ENCODE measurements at regions of chr5 and their contacts with region 1.

Region 1: GRCh38 chr5:115309751-115310370 is 13.4 kb upstream of the CCDC112 start:
- DNase-seq: peak; percentile 49
- ATAC-seq: peak; percentile 69
- H3K4me3 ChIP-seq: no peak overlapping the region
- H3K27ac ChIP-seq: no peak overlapping the region
- H3K4me1 ChIP-seq: peaks cover 0 to 3% of the 10 kb centered on the region in 2 experiments; a peak in 1 of 4 replicates
- H3K27me3 ChIP-seq: no peaks in the 10 kb centered on the region
- CTCF ChIP-seq: peak; percentile 48 to 78 (median 70); a peak in 5 of 6 replicates
- POLR2A ChIP-seq: no peak
- RAD21 ChIP-seq: peak; percentile 87

Region 2: DNA sequence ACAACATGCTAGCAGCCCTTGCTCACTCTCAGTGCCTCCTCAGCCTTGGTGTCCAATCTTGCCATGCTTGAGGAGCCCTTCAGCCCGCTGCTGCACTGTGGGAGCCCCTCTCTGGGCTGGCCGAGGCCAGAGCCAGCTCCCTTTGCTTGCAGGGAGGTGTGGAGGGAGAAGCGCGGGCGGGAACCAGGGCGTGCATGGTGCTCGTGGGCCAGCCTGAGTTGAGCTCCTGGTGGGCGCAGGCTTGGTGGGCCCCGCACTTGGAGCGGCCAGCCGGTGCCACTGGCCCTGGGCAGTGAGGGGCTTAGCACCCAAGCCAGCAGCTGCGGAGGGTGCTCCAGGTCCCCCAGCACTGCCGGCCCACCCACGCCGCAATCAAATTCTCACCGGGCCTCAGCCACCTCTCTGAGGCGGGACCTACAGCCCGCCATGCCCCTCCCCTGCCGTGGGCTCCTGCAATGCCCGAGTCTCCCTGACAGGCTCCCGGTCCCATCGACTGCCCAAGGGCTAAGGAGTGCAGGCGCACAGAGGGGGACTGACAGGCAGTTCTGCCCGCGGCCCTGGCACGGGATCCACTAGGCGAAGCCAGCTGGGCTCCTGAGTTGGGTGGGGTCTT is 614.5 kb before region 1 on chr5:
- CTCF ChIA-PET with region 1: no interaction called
- POLR2A ChIA-PET with region 1: no interaction called
- RAD21 ChIA-PET with region 1: no interaction called
- intact Hi-C with region 1: no loop called
- DNase-seq: no peak
- ATAC-seq: no peak
- H3K4me3 ChIP-seq: no peak overlapping the region
- H3K27ac ChIP-seq: no peak overlapping the region
- H3K4me1 ChIP-seq: no peaks in the 10 kb centered on the region
- H3K27me3 ChIP-seq: no peaks in the 10 kb centered on the region
- CTCF ChIP-seq: no peak
- POLR2A ChIP-seq: no peak
- RAD21 ChIP-seq: no peak

Region 3: GRCh38 chr5:115377468-115378217 is 67.8 kb after region 1 on chr5:
- CTCF ChIA-PET with region 1: interaction called, 6 read pairs
- POLR2A ChIA-PET with region 1: no interaction called
- RAD21 ChIA-PET with region 1: no interaction called
- intact Hi-C with region 1: loop called (anchors 5 kb)
- DNase-seq: peak; percentile 35
- ATAC-seq: peak; percentile 61
- H3K4me3 ChIP-seq: peak overlapping the region; percentile 16 to 33
- H3K27ac ChIP-seq: peak overlapping the region; percentile 2; the same call in 1 of the 2 replicates
- H3K4me1 ChIP-seq: peaks cover 18 to 64% of the 10 kb centered on the region in 2 experiments
- H3K27me3 ChIP-seq: no peaks in the 10 kb centered on the region
- CTCF ChIP-seq: peak; percentile 30 to 58 (median 49); a peak in 4 of 6 replicates
- POLR2A ChIP-seq: no peak
- RAD21 ChIP-seq: peak; percentile 77

Region 4: DNA sequence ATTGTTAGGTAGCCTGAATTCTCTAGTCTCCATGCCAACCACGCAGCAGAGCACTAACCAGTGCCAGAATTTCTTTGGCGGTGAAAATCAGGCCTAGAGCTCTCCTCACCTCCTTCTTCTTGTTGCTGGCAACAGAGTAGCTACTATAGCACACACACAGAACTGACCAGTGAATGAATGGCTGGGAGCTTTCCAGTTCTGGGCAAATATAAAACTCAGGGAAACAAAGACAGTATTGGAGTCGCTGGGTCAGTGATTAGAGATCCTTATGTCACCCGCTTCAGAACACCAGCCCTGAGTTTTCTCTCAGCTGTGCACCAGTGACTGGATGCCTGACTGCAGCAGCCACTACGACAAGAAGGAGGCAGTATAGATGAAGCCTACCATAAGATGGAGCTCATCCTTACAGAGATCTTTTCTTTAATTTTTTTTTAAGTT is 261.6 kb after region 1 on chr5:
- CTCF ChIA-PET with region 1: interaction called, 51 read pairs
- POLR2A ChIA-PET with region 1: interaction called, 6 read pairs
- RAD21 ChIA-PET with region 1: interaction called, 7 to 22 read pairs
- intact Hi-C with region 1: loop called (anchors 1 kb)
- DNase-seq: no peak
- ATAC-seq: peak; percentile 39; the same call in 1 of the 2 replicates
- H3K4me3 ChIP-seq: no peak overlapping the region
- H3K27ac ChIP-seq: no peak overlapping the region
- H3K4me1 ChIP-seq: peaks cover 0 to 32% of the 10 kb centered on the region in 2 experiments; a peak in 3 of 4 replicates
- H3K27me3 ChIP-seq: no peaks in the 10 kb centered on the region
- CTCF ChIP-seq: peak in 1 of 3 experiments; percentile 19; a peak in 1 of 6 replicates
- POLR2A ChIP-seq: no peak
- RAD21 ChIP-seq: no peak

Region 5: GRCh38 chr5:115579747-115580173 is 269.9 kb after region 1 on chr5:
- CTCF ChIA-PET with region 1: interaction called, 51 read pairs
- POLR2A ChIA-PET with region 1: interaction called, 6 read pairs
- RAD21 ChIA-PET with region 1: interaction called, 7 to 22 read pairs
- intact Hi-C with region 1: loop called (anchors 1 kb)
- DNase-seq: no peak
- ATAC-seq: no peak
- H3K4me3 ChIP-seq: no peak overlapping the region
- H3K27ac ChIP-seq: no peak overlapping the region
- H3K4me1 ChIP-seq: peaks cover 0 to 22% of the 10 kb centered on the region in 2 experiments; a peak in 3 of 4 replicates
- H3K27me3 ChIP-seq: no peaks in the 10 kb centered on the region
- CTCF ChIP-seq: no peak
- POLR2A ChIP-seq: no peak
- RAD21 ChIP-seq: no peak

Region 6: GRCh38 chr5:115586601-115587048 is 276.8 kb after region 1 on chr5:
- CTCF ChIA-PET with region 1: interaction called, 3 read pairs
- POLR2A ChIA-PET with region 1: no interaction called
- RAD21 ChIA-PET with region 1: no interaction called
- intact Hi-C with region 1: loop called (anchors 2 kb)
- DNase-seq: no peak
- ATAC-seq: peak; percentile 64
- H3K4me3 ChIP-seq: no peak overlapping the region
- H3K27ac ChIP-seq: no peak overlapping the region
- H3K4me1 ChIP-seq: peaks cover 0 to 4% of the 10 kb centered on the region in 2 experiments; a peak in 1 of 4 replicates
- H3K27me3 ChIP-seq: no peaks in the 10 kb centered on the region
- CTCF ChIP-seq: peak in 2 of 3 experiments; percentile 59 to 62; a peak in 3 of 6 replicates
- POLR2A ChIP-seq: no peak
- RAD21 ChIP-seq: peak; percentile 74

Region 7: DNA sequence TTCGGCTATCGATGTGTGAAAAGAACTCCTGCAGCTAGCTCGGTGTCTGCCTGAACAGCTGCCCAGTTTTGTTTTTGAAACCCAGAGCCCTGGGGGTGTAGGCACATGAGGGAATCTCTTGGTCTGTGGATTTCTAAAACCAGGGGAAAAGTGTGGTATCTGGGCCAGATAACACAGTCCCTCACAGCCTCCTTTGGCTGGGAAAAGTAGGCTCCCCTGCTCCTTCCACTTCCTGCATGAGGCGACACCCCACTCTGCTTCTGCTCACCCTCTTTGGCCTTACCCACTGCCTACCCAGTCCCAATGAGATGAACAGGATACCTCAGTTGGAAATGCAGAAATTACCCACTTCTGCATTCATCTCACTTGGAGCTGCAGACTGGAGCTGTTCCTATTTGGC is 516.1 kb after region 1 on chr5:
- CTCF ChIA-PET with region 1: no interaction called
- POLR2A ChIA-PET with region 1: no interaction called
- RAD21 ChIA-PET with region 1: no interaction called
- intact Hi-C with region 1: loop called (anchors 2 kb)
- DNase-seq: no peak
- ATAC-seq: peak; percentile 49
- H3K4me3 ChIP-seq: no peak overlapping the region
- H3K27ac ChIP-seq: no peak overlapping the region
- H3K4me1 ChIP-seq: no peaks in the 10 kb centered on the region
- H3K27me3 ChIP-seq: no peaks in the 10 kb centered on the region
- CTCF ChIP-seq: no peak
- POLR2A ChIP-seq: no peak
- RAD21 ChIP-seq: no peak

Region 8: DNA sequence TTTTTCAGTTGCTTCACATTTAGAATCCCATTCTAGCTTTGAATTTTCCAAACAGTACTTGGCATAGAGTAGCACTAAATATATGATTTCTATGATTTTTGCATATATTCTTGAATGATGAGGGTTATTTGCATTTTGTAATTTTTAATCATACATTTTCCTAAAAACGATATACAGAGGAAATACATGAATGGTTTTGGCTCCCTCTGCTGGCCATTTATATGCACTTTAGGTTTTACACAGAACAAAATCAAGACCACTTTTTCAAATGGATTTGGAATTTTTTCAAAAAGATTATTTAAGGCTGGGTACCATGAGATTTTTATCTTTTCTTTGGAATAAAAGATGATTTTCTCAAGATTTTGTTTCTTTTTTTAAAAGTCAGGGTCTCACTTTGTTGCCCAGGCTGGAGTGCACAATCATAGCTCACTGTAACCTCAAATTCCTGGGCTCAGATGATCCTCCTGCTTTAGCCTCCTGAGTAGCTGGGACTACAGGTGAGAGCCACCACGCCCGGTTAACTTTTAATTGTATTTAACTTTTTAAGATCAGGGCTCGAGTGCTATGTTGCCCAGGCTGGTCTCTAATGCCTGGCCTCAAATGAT is 758.3 kb after region 1 on chr5:
- CTCF ChIA-PET with region 1: interaction called, 3 read pairs
- POLR2A ChIA-PET with region 1: no interaction called
- RAD21 ChIA-PET with region 1: no interaction called
- intact Hi-C with region 1: loop called (anchors 5 kb)
- DNase-seq: peak; percentile 78
- ATAC-seq: peak; percentile 76
- H3K4me3 ChIP-seq: no peak overlapping the region
- H3K27ac ChIP-seq: no peak overlapping the region; the same call in 1 of the 2 replicates
- H3K4me1 ChIP-seq: peaks cover 4 to 31% of the 10 kb centered on the region in 2 experiments; a peak in 3 of 4 replicates
- H3K27me3 ChIP-seq: no peaks in the 10 kb centered on the region
- CTCF ChIP-seq: peak; percentile 79 to 99 (median 83)
- POLR2A ChIP-seq: no peak
- RAD21 ChIP-seq: peak; percentile 98